IMR-90 (cell line): ENCODE measurements at regions of chr2 and their contacts with region 1.

Region 1: DNA sequence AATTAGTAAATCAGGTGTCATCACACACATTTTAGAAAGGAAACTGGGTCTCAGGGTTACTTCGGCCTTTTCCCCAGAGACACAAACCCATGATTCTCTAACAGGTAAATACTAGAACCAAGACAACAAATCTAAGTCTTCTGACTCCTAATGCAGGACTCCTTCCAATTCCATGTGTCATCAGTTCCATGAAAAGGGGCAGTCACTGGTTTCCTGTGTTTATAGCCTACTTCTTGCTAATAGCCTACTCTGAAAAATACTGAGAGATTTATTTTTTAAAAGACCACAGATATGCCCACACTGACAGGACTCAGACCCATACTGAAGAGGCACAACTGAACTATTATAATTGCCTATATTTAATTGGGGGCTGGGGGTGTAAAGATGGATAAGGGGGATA is 33.0 kb downstream of the RAB1A start:
- DNase-seq: peak; percentile 65
- ATAC-seq: peak; percentile 61
- H3K4me3 ChIP-seq: no peak overlapping the region
- H3K27ac ChIP-seq: no peak overlapping the region
- H3K4me1 ChIP-seq: no peaks in the 10 kb centered on the region; the same call in 1 of the 2 replicates
- H3K27me3 ChIP-seq: no peaks in the 10 kb centered on the region
- CTCF ChIP-seq: no peak
- POLR2A ChIP-seq: no peak
- RAD21 ChIP-seq: no peak

Region 2: GRCh38 chr2:64865073-64865830 is 231.7 kb before region 1 on chr2:
- CTCF ChIA-PET with region 1: no interaction called
- POLR2A ChIA-PET with region 1: no interaction called
- dilution Hi-C with region 1: no loop called
- in situ Hi-C with region 1: no loop called
- intact Hi-C with region 1: no loop called
- DNase-seq: peak; percentile 54
- ATAC-seq: peak; percentile 77
- H3K4me3 ChIP-seq: peak overlapping the region; percentile 58
- H3K27ac ChIP-seq: peak overlapping the region; percentile 3; the same call in 1 of the 2 replicates
- H3K4me1 ChIP-seq: peaks cover 13% of the 10 kb centered on the region
- H3K27me3 ChIP-seq: peaks cover 43% of the 10 kb centered on the region
- CTCF ChIP-seq: peak; percentile 83
- POLR2A ChIP-seq: no peak
- RAD21 ChIP-seq: peak; percentile 90

Region 3: DNA sequence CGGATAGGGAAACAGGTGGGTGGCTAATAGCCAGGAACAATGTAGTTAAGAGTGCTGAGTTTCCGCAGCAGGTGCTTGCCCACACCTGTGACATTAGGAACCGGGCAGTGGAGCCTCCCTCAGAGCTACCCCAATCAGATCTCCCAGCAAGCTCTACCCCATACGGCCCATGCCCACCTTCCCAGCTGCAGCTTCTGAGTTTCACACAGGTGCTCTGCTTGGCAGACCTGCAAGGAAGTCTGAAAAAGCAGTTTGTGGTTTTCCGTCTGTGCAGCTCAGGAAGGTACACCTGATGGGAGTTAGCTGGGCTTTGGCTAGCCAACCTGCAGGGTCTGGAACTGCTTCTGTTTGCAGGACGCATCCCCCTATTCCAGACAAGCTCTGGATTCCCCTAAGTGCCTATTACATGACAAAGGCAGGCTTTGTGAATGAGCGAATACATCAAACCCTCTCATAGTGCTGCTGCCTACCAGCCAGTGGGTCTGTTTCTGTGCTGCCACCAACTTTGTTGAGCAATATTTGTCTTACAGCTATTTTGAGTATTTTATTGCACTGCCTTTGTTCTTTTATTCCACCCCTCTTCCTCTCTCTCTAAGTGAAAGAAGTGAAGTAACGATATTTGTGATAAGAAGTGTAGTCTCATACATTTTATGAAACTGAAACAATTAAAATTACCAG is 65.5 kb before region 1 on chr2:
- CTCF ChIA-PET with region 1: no interaction called
- POLR2A ChIA-PET with region 1: no interaction called
- dilution Hi-C with region 1: no loop called
- in situ Hi-C with region 1: no loop called
- intact Hi-C with region 1: no loop called
- DNase-seq: no peak
- ATAC-seq: no peak
- H3K4me3 ChIP-seq: no peak overlapping the region
- H3K27ac ChIP-seq: no peak overlapping the region
- H3K4me1 ChIP-seq: peaks cover 4% of the 10 kb centered on the region; the same call in 1 of the 2 replicates
- H3K27me3 ChIP-seq: peaks cover 3% of the 10 kb centered on the region
- CTCF ChIP-seq: no peak
- POLR2A ChIP-seq: no peak
- RAD21 ChIP-seq: no peak

Region 4: DNA sequence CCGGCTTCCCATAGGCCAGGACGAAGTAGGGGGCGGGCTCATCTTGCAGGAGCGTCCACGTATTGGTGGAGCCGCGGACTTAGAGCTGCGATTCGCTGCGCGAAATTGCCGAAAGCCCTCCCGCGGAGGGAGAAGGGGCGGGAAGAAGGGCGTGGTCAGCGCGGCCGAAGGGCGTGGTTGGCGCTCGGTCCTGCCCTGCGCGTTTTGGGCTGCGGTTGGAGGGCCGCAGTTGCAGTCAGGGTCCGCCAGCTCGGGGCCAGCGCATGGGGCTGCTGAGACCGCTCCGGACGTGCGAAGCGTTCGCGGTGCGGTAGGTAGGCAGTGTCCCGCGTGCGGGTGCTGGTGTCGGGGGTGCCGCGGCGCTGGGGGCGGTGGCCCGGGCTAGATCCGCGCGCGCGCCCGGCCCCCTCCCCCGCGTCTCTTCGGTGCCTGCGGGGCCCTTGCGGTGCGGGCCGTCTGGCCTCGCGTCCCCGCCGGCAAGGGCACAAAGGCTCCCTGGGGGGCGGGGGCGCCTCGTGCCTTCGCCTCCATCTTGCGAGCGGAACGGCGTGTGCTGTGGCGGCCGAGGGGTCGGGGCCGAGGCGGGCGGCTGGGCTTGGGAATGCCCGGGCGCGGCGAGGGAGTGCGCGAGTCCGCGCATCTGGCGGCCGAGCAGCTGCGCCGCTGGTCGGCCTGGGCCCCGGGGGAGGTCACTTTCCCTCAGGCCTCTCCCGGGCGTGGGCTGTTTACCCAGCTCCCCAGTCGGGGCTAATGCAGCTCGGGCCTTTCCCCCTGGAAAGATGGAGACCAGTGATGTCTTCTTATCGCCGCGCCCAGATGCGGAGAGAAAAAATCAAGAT is 40.5 kb before region 1 on chr2 and contains the start of gene CEP68:
- CTCF ChIA-PET with region 1: no interaction called
- POLR2A ChIA-PET with region 1: interaction called, 10 read pairs
- dilution Hi-C with region 1: no loop called
- in situ Hi-C with region 1: no loop called
- intact Hi-C with region 1: no loop called
- DNase-seq: peak; percentile 97
- ATAC-seq: peak; percentile 98
- H3K4me3 ChIP-seq: peak within 1 kb of the TSS; percentile 63
- H3K27ac ChIP-seq: peak within 1 kb of the TSS; percentile 40
- H3K4me1 ChIP-seq: peaks cover 2% of the 10 kb centered on the region; the same call in 1 of the 2 replicates
- H3K27me3 ChIP-seq: no peaks in the 10 kb centered on the region
- CTCF ChIP-seq: no peak
- POLR2A ChIP-seq: peak; percentile 80
- RAD21 ChIP-seq: no peak
- total RNA-seq, gene CEP68: 5.3 and 5.6 TPM in 2 replicates